AG04450 (cell line): ENCODE measurements at regions of chr1 and their contacts with region 1.

Region 1: GRCh38 chr1:40679165-40679953 is 12.1 kb upstream of the NFYC start:
- DNase-seq: no peak
- H3K4me3 ChIP-seq: no peak overlapping the region
- H3K27ac ChIP-seq: no peak overlapping the region
- H3K27me3 ChIP-seq: peaks cover 12% of the 10 kb centered on the region
- CTCF ChIP-seq: no peak

Region 2: DNA sequence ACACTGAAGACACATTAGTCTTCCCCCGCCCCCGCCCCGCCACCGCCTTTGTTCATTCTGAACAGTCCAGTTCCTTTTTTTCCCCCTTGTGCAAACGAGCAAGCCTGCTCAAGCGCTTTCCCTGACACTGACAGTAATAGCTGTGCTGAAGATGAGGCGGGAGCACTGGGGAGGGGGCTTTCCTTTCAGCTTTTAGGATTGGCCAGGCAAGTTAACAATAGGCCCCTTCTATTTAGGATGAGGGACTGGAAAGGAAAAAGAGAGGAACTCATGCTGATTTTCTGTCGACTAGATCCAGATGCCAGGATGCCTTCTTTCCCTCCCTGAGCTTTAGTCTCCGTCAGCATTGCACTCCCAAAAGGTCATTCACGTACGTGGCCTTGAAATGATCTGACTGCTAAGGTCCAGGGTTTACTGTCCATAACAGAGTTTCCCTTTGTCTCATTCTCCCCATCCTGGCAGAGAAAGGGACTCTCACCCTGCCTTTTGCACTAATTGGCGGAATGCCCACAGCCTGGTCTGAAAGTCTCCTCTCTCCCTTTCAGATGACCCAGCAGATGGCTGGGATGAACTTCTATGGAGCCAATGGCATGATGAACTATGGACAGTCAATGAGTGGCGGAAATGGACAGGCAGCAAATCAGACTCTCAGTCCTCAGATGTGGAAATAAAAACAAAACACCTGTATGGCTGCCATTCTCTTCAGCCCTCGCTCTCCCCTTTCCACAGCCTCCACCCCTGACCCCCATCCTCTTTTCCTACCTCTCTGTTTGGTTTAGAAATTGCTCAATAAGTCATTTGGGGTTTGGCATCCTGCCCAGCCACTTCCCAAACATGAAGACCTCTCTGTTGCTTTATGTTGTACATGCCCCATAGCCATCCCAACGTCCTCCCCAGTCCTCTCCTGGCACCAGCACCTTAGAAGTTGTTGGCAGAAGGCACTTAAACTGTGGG is 257.7 kb before region 1 on chr1:
- CTCF ChIA-PET with region 1: no interaction called
- POLR2A ChIA-PET with region 1: no interaction called
- DNase-seq: no peak
- H3K4me3 ChIP-seq: no peak overlapping the region
- H3K27ac ChIP-seq: no peak overlapping the region
- H3K27me3 ChIP-seq: no peaks in the 10 kb centered on the region
- CTCF ChIP-seq: no peak

Region 3: DNA sequence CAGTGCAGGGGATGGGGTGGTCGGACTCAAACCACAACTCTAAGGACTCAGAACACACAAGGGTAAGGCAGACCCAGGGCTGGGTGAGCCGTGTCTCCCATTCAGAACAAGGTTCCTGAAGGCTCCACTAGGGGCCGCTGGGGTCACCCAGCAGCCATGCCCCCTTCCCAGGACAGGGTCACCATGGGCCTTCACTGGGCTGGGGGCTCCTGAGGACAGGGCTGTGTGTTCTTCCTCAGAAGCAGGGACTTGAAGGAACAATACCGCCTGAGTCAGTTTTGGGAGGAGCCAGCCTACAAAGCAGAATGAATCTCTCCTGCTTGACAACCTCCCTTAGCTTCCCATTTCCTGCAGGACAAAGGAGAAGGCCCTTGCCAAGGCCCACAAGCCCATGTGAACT is 29.3 kb before region 1 on chr1:
- CTCF ChIA-PET with region 1: no interaction called
- POLR2A ChIA-PET with region 1: no interaction called
- DNase-seq: no peak
- H3K4me3 ChIP-seq: no peak overlapping the region
- H3K27ac ChIP-seq: no peak overlapping the region
- H3K27me3 ChIP-seq: peaks cover 27% of the 10 kb centered on the region
- CTCF ChIP-seq: peak; percentile 30

Region 4: DNA sequence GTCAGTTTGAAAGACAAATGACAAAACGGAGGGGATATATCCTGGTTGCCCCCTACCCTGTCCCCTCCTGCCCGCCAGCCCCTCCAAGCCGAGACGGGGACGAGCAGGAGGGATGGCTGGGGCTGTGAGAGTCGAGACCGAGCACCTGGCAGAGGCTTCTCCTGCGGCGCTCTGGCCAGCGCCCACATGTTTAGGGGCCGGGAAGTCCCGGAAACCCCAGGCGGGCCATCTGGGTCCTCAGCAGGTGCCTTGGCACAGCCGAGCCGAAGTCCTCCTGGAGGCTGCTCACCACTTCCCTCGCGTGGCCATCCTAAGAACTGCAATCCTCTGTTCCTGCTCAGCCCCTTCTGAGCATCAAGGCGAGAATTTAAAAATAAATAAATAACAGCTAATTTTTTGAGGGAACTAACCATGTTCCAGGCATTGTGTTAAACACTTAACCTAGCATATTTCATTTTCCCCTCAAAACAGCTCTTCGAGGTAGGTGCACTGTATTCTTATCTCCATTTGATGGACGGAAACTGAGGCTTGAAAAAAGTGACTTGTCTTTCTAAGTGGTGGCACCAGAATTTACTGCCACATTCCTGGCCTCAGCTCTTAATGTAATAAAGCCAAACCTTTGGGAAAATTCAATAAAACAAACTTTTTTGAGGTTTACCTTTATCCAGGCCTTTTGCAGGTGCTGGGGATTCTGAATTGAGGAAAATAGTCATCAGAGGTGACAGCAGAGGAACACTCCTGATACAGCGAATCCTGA is 10.4 kb before region 1 on chr1:
- CTCF ChIA-PET with region 1: interaction called, 11 read pairs
- POLR2A ChIA-PET with region 1: no interaction called
- DNase-seq: peak; percentile 18
- H3K4me3 ChIP-seq: no peak overlapping the region
- H3K27ac ChIP-seq: no peak overlapping the region
- H3K27me3 ChIP-seq: peaks cover 25% of the 10 kb centered on the region
- CTCF ChIP-seq: peak; percentile 94

Region 5: GRCh38 chr1:40699787-40700186 is 20.4 kb after region 1 on chr1:
- CTCF ChIA-PET with region 1: no interaction called
- POLR2A ChIA-PET with region 1: no interaction called
- DNase-seq: no peak
- H3K4me3 ChIP-seq: no peak overlapping the region
- H3K27ac ChIP-seq: no peak overlapping the region
- H3K27me3 ChIP-seq: no peaks in the 10 kb centered on the region
- CTCF ChIP-seq: no peak

Region 6: DNA sequence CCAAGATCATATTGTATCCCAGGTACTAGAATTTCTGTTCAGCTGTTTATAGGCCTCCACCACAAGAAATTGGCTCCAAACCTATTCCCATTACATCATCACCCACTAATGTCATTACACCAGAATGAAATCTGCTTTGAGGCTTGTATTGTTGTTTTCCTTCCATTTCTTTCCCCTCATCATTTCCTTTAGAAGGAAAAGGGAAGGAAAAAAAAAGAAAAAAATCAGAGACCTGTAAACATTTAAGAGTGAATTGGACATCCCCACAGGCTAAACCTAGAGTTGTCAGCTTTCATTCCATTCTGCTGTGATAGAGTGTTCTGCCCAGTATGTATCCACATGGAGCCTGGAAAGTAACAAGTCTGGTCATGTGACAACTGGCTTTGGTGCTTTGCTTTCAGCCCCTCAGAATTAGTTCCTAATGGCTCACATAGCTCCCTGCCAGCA is 56.7 kb after region 1 on chr1:
- CTCF ChIA-PET with region 1: no interaction called
- POLR2A ChIA-PET with region 1: no interaction called
- DNase-seq: no peak
- H3K4me3 ChIP-seq: no peak overlapping the region
- H3K27ac ChIP-seq: no peak overlapping the region
- H3K27me3 ChIP-seq: no peaks in the 10 kb centered on the region
- CTCF ChIP-seq: no peak